Dendritic cell treated with granulocyte-macrophage colony-stimulating factor and Interleukin-4, amounts not matched to agents 40 ng/mL and 50 ng/mL, for 4 days (primary cell): ENCODE measurements at regions of chr10 and their contacts with region 1.

Region 1: DNA sequence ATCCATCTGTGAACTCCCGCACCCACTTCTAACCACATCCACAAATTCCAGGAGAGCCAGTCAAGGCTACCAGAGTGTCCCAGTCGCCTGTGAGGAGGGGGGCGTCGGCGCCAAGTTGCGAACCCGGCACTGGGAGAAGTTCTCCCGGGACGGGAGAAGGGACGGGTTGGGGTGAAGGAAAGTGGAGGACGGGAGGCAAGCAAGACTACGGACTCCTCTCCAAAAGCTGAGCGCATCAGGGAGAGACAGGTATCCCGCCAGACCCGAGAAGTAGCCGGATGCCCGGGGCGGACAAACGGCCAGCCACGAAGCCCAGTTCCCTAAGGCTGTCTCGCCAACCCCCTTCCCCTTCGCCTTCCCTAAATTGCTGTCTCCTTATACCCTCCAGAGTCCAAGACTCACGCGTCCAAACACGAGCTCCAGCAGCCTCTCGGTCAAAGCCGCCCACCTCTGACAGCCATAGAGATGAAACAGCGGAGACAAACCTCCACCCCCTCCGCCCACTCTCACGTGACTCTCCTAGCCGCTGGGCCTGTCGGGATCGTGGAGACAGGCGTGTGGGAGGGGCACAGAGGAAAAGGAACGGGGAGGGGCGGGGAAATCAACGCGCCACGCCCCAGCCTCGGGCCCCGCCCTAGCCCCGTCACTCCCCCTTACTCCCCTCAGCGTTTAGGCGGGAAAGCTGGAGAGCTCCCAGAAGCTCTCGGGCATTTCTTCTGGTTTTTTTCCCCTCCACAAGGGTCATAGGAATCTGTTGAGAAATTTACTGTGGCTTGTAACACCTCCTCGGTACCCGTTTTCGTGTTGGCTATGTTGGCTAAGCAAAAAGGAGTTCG is at the start of gene MICU1:
- H3K4me3 Mint-ChIP-seq: peak within 1 kb of the TSS; percentile 84
- H3K27ac Mint-ChIP-seq: peak within 1 kb of the TSS; percentile 86
- H3K4me1 Mint-ChIP-seq: peaks cover 16% of the 10 kb centered on the region
- H3K27me3 Mint-ChIP-seq: no peaks in the 10 kb centered on the region

Region 2: DNA sequence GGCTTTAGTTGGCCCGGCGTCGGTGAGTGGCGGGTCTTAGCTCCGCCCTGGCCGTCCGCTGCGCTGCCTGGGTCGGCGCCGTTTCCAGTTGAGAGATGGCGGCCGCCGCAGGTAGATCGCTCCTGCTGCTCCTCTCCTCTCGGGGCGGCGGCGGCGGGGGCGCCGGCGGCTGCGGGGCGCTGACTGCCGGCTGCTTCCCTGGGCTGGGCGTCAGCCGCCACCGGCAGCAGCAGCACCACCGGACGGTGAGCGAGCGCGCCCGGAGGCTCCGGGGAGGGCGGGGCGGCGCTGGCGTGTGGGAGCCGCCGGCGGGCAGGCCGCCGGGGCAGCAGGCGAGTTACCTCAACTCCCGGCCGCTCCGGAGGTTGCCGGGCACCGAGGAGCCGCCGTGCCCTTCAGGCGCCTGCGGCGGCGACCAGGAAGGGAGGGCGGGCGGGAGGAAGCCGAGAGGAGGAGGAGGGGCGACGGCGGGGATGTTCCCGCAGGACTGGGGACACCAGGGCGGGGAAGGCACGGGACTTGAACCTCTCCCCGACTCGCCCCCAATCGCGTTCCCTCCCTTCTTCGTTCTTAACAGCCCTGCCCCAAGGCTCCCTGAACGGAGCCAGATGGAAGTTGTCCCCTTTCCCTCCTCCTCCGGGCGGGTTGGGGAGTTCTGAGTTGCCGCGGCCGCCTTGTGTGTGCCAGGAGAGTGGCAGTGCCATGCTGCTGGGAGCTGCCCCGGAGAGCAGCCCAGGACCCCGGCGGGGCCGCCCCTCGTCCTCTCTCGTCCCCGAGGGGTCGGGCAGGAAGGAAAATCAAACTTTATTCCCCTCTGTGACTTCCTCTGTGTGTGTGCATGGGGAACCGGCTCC is 66.5 kb after region 1 on chr10 and contains the start of gene MCU:
- intact Hi-C with region 1: loop called (anchors 2 kb)
- H3K4me3 Mint-ChIP-seq: peak within 1 kb of the TSS; percentile 77
- H3K27ac Mint-ChIP-seq: peak within 1 kb of the TSS; percentile 63
- H3K4me1 Mint-ChIP-seq: peaks cover 32% of the 10 kb centered on the region
- H3K27me3 Mint-ChIP-seq: no peaks in the 10 kb centered on the region

Region 3: DNA sequence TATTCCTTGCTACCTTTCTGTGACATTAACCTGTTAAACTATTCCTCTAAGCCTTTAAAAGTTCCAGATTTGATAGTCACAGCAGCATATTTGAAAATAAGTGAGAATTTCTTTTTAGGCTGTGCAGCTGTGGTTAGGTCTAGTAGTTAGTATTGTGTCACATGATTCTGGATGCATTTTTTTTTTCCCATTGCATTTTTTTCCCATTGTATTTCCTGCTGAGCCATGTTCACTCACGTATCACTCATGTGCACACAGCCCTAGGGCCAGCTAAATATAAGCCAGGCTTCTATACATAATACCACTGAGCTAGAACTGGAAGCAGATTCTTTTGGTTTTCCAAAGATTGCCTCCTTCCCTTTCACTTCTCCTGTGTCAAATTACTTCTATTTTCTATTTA is 583.9 kb after region 1 on chr10:
- intact Hi-C with region 1: no loop called
- H3K4me3 Mint-ChIP-seq: no peak overlapping the region
- H3K27ac Mint-ChIP-seq: no peak overlapping the region
- H3K4me1 Mint-ChIP-seq: peaks cover 9% of the 10 kb centered on the region
- H3K27me3 Mint-ChIP-seq: no peaks in the 10 kb centered on the region